ENCODE measurements at regions of chr1 and their contacts with region 1.

Region 1: DNA sequence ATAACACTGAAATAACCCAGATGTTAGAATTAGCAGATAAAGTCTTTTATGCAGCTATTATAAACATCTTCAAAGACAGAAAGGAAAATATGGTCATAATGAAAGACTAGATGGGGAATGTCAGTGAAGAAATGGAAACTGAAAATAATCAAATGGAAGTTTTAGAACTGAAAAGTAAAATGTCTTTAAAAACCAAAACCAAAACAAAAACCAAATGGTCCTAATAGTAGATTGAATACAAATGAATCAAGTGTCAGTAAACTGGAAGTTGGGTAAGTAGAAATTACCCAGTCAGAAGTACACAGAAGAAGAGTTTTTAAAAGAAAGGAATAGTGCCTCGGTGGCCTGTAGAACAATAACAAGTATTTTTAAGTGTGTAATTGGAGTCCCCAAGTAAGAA is 72.7 kb downstream of the SYCP1 start:
- DNase-seq: no peak
- H3K4me3 ChIP-seq: no peak overlapping the region
- H3K27ac ChIP-seq: no peak overlapping the region
- H3K4me1 ChIP-seq: no peaks in the 10 kb centered on the region
- H3K27me3 ChIP-seq: peaks cover 11% of the 10 kb centered on the region
- CTCF ChIP-seq: no peak

Region 2: DNA sequence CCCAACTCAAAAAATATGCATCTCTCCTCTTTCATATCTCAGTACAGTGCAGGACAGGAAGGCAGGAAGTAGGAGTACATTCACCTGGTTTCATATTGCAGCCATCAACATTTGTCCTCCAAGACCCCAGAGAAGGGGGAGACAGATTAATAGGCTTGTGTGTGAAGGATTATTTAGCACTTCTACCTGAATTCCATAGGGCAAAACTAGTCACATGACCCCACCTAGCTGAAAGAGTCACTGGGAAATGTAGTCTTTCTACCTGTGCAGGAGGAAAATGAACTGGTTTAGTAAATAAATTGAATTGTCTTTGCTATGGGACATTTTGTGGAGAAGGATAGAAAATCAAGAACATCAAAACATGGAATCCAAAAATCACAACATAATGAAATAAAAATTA is 402.5 kb before region 1 on chr1:
- CTCF ChIA-PET with region 1: no interaction called
- POLR2A ChIA-PET with region 1: no interaction called
- intact Hi-C with region 1: no loop called
- DNase-seq: no peak
- H3K4me3 ChIP-seq: no peak overlapping the region
- H3K27ac ChIP-seq: no peak overlapping the region
- H3K4me1 ChIP-seq: no peaks in the 10 kb centered on the region
- H3K27me3 ChIP-seq: no peaks in the 10 kb centered on the region
- CTCF ChIP-seq: no peak

Region 3: DNA sequence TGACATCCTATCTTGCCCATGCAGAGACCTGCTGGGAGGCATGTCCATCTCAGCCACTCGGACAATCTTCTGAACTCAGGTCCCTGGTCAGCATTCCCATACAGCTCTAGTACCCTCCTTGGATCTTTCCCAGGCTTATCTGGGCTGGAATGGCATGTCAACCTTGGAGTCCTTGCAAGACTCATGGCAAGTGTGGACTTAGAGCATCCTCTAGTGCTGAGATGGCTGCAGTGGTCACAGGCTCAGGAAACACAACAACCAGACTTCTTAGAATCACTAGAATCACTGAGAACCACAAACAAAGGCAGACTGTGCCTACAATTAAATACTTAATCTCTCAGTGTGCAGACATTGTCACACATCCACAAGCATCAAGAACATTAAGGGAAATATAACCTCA is 29.2 kb after region 1 on chr1:
- CTCF ChIA-PET with region 1: no interaction called
- POLR2A ChIA-PET with region 1: no interaction called
- intact Hi-C with region 1: loop called (anchors 2 kb)
- DNase-seq: peak; percentile 17
- H3K4me3 ChIP-seq: no peak overlapping the region
- H3K27ac ChIP-seq: no peak overlapping the region
- H3K4me1 ChIP-seq: no peaks in the 10 kb centered on the region
- H3K27me3 ChIP-seq: no peaks in the 10 kb centered on the region
- CTCF ChIP-seq: peak; percentile 44

Region 4: GRCh38 chr1:114979278-114979891 is 52.0 kb after region 1 on chr1:
- CTCF ChIA-PET with region 1: no interaction called
- POLR2A ChIA-PET with region 1: no interaction called
- intact Hi-C with region 1: no loop called
- DNase-seq: peak; percentile 65
- H3K4me3 ChIP-seq: no peak overlapping the region
- H3K27ac ChIP-seq: no peak overlapping the region
- H3K4me1 ChIP-seq: no peaks in the 10 kb centered on the region
- H3K27me3 ChIP-seq: peaks cover 14% of the 10 kb centered on the region
- CTCF ChIP-seq: peak; percentile 79

Measured in A673 (cell line).